ENCODE measurements at regions of chr19 and their contacts with region 1.

Region 1: DNA sequence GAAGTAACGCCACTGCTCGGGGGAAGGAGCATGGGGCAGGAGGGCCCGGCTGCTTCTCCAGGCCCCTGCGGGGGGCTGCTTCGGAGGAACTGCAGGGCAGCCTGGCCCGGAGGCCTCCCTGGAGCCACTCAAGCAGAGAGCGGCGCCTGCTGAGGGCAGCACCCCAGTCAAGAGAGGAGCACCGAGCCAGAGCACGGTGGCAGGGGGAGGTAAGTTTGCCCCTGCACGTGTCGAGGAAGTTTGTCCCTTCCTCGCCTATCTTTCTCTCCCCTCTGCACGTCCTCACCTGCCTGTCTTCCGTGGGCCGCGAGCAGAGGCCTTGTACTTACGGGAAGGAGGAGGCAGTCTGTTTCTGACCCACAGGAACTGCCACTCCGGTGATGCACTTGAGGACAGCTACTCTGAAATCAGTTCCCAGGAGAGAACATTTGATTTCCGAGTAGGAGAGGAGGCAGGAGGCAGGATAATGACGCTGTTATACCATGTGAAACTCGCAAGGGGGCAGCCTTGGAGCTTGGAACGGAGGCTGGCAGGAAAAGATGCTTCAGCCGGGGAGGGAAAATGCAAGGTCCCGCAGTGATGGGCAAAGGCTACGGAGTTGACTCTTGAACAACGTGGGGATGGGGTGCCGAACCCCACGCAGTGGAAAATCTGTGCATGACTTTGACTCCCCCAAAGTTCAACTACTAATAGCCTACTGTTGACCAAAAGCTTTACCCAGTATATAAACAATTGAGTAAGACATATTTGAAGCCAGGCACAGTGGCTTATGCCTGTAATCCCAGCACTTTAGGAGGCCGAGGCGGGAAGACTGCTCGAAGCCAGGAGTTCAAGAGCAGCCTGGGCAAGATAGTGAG is 5.0 kb downstream of the FFAR1 start:
- DNase-seq: peak; percentile 55
- H3K4me3 Mint-ChIP-seq: no peak overlapping the region
- H3K27ac Mint-ChIP-seq: peak overlapping the region; percentile 62
- H3K4me1 Mint-ChIP-seq: peaks cover 25% of the 10 kb centered on the region
- H3K27me3 Mint-ChIP-seq: peaks cover 2% of the 10 kb centered on the region

Region 2: GRCh38 chr19:35281303-35281702 is 71.4 kb before region 1 on chr19:
- intact Hi-C with region 1: no loop called
- DNase-seq: no peak
- H3K4me3 Mint-ChIP-seq: no peak overlapping the region
- H3K27ac Mint-ChIP-seq: no peak overlapping the region
- H3K4me1 Mint-ChIP-seq: no peaks in the 10 kb centered on the region
- H3K27me3 Mint-ChIP-seq: peaks cover 20% of the 10 kb centered on the region

Region 3: DNA sequence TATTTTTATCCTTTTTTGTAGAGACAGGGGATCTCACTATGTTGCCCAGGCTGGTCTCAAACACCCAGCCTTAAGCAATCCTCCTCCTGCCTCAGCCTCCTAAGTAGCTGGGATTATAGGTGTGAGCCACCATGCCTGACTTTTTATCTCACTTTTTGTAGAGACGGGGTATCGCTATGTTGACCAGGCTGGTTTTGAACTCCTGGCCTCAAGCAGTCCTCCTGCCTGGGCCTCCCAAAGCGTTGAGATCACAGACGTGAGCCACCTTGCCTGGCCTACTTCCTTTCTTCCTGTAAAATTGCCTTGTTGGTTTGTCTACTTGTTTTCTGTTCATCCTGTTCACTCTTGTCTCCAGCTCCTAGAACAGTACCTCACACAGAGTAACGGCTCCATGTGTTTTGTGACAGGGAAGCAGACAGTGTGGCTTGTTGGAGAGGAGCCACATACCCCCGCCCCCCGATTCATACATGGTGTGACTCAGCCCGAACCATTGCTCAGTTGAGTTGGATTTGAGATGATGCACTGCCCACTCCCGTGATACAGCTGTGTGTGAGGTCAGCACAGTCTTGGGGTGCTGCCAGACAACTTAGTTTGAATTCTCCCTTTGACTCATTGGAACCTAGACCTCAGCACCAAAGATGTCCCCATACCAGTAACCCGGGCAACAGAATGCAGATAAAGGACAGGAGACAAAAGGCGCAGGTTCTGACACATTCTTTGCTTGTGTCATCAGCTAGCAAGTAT is 52.4 kb after region 1 on chr19:
- intact Hi-C with region 1: loop called (anchors 2 kb)
- DNase-seq: no peak
- H3K4me3 Mint-ChIP-seq: no peak overlapping the region
- H3K27ac Mint-ChIP-seq: peak overlapping the region; percentile 84
- H3K4me1 Mint-ChIP-seq: peaks cover 9% of the 10 kb centered on the region
- H3K27me3 Mint-ChIP-seq: peaks cover 10% of the 10 kb centered on the region

Region 4: DNA sequence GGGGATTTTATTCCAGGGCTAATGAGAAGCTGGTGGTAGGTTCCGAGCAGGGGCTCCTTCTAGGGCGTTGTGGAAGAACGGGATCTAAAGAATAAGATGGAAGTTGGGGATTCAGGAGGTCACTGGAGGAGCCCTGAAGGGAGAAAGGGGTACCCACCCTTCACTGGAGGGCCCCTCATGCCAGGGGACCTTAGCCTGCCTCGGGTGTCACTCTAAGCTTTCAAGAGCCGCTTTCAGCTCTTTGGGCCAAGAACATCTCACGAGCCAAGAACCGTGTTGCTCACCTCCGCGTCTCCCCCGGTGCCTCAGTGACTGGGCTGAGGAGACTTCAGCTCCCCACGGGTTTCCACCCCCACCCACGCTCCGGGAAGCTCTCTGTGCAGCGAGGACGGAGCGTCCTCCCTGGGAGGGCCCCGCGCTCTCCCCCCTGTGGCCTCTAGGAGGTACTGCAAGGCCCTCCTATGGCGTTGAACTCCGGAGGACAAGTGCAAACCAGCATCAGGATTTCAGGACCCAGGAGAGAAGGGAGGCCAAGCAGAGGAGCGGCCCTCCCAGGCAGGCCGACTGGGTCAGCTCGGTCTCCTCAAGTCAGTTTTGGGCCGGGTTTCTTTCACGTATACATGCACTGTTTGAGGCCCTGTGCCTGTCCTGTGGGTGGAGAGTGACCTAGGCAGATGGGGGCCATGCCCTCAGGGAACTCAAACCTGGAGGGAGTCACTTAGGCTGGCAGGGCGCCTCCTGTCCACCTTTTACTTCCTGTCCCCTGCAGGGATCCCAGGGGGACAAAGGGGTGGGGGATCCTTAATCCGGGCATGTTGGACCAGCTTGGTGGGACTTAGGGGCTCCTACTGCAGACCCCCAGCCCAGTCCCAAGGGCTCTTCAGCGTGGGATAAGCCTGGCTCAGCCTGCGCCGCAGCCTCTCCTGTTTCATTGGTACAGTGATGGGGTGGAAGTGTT is 142.7 kb after region 1 on chr19:
- intact Hi-C with region 1: loop called (anchors 1 kb)
- DNase-seq: peak; percentile 47
- H3K4me3 Mint-ChIP-seq: no peak overlapping the region
- H3K27ac Mint-ChIP-seq: no peak overlapping the region
- H3K4me1 Mint-ChIP-seq: peaks cover 11% of the 10 kb centered on the region
- H3K27me3 Mint-ChIP-seq: peaks cover 11% of the 10 kb centered on the region

Region 5: DNA sequence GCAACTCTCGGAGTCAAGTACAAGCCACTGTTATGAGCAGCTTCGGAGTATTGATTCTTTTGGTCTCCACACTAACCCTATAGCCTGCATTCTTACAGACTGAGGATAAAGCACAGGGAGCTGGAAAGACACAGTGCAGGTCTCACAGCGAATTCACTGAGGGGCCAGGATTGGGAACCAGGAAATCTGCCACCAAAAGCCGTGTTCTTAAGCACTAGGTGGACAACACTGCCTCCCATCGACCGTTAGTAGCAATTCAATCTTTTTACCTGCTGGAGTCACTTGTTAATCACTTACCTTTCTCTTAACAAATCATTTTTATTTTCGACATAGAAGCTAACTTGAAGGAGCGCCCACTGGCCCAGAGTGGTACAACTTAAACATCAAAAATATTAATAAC is 239.6 kb after region 1 on chr19:
- intact Hi-C with region 1: loop called (anchors 1 kb)
- DNase-seq: no peak
- H3K4me3 Mint-ChIP-seq: no peak overlapping the region
- H3K27ac Mint-ChIP-seq: no peak overlapping the region
- H3K4me1 Mint-ChIP-seq: peaks cover 10% of the 10 kb centered on the region
- H3K27me3 Mint-ChIP-seq: peaks cover 4% of the 10 kb centered on the region

Measured in activated T-helper 1 cell treated with anti-CD3 and anti-CD28 coated beads, Interleukin-12 subunit alpha, Interleukin-12 subunit beta, Interleukin-2, Interleukin-4 antibody, amounts not matched to agents 30 ng/mL and 10 ng/mL and 1 ng/mL, durations not matched to agents 14 hours and 24 hours and 36 hours (primary cell).